ENCODE measurements at regions of chr20 and their contacts with region 1.

Region 1: GRCh38 chr20:40689943-40690835 is 1.2 kb upstream of the MAFB start:
- H3K4me3 ChIP-seq: peak overlapping the region; percentile 51
- H3K27ac ChIP-seq: peak overlapping the region; percentile 90
- H3K4me1 ChIP-seq: 0 out of 2 replicates have a peak, but pooled peaks cover 2% of the 10 kb centered on the region
- CTCF ChIP-seq: peak; percentile 83

Region 2: DNA sequence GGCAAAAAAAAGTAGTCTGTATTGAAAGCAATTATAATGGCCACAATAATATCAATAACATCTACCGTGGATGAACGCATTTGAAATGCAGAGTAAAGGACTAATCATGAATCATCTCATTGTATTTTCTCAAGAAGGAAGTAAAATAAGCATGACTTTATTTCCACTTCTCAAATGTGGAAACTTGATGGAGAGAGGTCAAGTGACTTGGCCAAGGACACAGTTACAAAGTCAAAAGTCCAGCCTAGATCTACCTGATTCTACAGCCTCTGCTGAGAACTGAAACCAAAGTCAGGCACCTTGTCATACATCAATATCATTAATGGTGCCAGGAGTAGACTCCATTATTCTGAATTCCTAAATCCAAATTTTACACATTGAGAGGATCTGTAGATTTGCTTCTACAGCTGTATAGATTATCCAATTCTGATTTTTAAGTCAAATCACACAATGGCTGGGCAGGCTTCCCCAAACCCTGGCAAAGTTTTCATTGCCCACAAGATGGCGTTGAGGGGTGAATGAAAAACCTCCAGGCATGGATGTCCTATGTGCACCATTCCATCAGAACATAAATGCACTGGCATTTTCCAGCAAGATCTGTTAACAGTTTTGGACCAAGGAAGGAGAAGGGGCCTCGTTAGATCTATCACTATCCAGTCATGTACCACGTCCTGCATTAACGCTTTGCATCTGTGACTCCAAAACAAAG is 424.2 kb before region 1 on chr20:
- CTCF ChIA-PET with region 1: interaction called, 11 read pairs
- POLR2A ChIA-PET with region 1: interaction called, 4 read pairs
- H3K4me3 ChIP-seq: no peak overlapping the region
- H3K27ac ChIP-seq: no peak overlapping the region
- H3K4me1 ChIP-seq: no peaks in the 10 kb centered on the region
- CTCF ChIP-seq: no peak

Region 3: DNA sequence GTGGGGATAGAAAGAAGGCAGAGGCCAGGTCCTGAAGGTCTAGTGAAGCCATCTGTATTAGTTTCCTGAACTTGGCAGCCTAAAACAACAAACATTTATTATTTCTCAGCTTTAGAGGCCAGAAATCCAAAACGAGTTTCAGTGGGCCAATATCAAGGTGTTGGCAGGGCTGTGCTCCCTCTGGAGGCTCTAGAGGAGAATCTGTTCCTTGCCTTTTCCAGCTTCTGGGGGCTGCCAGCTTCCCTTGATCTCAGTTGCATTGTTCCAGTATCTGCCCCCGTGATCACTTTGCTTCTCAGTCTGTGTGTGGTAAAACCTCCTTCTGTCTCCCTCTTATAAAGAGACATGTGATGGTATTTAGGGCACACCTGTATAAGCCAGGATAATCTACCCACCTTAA is 83.5 kb before region 1 on chr20:
- CTCF ChIA-PET with region 1: no interaction called
- POLR2A ChIA-PET with region 1: no interaction called
- H3K4me3 ChIP-seq: no peak overlapping the region
- H3K27ac ChIP-seq: no peak overlapping the region
- H3K4me1 ChIP-seq: no peaks in the 10 kb centered on the region
- CTCF ChIP-seq: no peak

Region 4: DNA sequence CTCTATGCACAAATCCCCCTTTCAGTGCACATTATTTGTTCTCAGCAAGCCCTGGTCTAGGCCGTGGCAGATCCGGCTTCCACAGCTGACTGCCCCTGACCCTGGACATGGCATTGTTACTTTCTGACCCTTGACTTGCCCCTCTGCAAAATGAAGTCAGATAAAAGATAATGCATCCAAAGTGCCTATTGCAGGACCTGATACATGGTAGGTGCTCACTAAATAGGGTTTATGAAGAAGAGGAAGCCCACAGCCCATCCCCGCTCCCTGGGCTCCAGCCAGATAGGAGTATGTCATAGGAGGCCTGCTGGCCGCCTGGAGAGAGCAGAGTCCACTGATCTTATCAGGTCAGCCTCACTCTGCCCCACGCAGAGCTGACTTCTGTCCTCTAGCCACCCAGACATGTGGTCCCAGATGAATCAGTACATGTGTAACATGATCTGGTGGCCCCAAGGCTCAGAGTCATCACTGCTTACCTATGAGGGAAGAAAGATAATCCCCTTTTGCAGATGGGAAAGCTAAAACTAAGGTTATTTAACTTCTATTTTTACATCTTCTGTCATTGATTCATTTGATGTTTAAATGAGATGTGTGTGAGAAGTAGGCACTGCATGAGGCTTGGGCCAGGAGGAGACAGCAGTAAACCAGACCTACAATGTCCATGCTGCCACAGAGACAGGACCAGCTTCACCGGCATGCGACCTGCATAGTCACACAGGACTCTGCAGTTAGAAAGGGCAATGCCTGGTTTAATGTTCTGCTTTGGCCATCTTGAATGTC is 21.6 kb before region 1 on chr20:
- CTCF ChIA-PET with region 1: interaction called, 5 read pairs
- POLR2A ChIA-PET with region 1: interaction called, 45 read pairs
- H3K4me3 ChIP-seq: no peak overlapping the region
- H3K27ac ChIP-seq: no peak overlapping the region
- H3K4me1 ChIP-seq: no peaks in the 10 kb centered on the region
- CTCF ChIP-seq: no peak

Region 5: DNA sequence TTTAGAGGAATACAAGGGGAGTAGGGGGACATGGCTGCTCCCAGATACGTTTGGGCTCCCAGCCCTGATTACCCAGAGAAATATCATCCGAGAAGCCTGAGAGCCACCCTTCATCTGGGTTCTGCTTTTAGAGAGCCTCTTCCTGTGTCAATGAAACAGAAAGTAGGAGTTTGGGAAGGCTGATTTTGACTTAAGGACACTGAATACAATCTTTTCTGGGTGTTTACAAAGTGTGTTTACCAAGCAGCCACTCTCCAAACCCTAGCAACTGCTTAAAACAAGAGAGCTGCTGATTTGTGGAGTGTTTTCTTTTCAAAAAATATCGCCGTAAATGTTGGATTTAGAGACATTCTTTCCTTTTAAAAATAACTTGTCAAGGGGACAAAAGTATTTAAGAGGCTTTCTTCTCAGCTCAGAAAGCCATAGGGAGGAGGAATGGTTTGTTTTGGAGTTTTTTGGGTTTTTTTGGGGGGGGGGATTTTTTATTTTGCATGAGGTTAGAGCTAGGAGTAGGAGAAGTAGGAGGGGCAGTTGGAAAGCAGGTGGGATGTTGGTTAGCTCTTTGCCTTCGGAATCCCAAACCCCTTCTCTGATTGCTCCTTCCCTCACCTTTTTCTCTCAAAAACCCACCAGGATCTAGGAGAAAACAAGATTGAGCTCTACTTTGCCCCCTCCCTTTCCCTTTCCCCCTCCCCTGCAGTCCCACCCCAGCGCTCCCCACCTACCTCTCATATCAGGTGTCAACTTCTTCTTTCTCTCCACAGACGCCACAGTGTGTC is 13.5 kb before region 1 on chr20:
- CTCF ChIA-PET with region 1: interaction called, 10 read pairs
- POLR2A ChIA-PET with region 1: interaction called, 45 read pairs
- H3K4me3 ChIP-seq: no peak overlapping the region
- H3K27ac ChIP-seq: no peak overlapping the region
- H3K4me1 ChIP-seq: no peaks in the 10 kb centered on the region
- CTCF ChIP-seq: no peak

Measured in HEK293 (cell line).